CD4-positive, alpha-beta memory T cell (primary cell): ENCODE measurements at regions of chr5 and their contacts with region 1.

Region 1: GRCh38 chr5:128154943-128155342 is 71.4 kb downstream of the SLC12A2 start:
- DNase-seq: no peak
- H3K4me3 ChIP-seq: no peak overlapping the region
- H3K4me3 Mint-ChIP-seq: no peak overlapping the region
- H3K27ac ChIP-seq: no peak overlapping the region
- H3K27ac Mint-ChIP-seq: no peak overlapping the region
- H3K4me1 ChIP-seq: no peaks in the 10 kb centered on the region
- H3K4me1 Mint-ChIP-seq: no peaks in the 10 kb centered on the region
- H3K27me3 ChIP-seq: no peaks in the 10 kb centered on the region
- H3K27me3 Mint-ChIP-seq: no peaks in the 10 kb centered on the region

Region 2: GRCh38 chr5:128101676-128102075 is 53.3 kb before region 1 on chr5:
- CTCF ChIA-PET with region 1: no interaction called
- POLR2A ChIA-PET with region 1: no interaction called
- intact Hi-C with region 1: loop called (anchors 10 kb)
- DNase-seq: no peak
- H3K4me3 ChIP-seq: no peak overlapping the region
- H3K4me3 Mint-ChIP-seq: no peak overlapping the region
- H3K27ac ChIP-seq: no peak overlapping the region
- H3K27ac Mint-ChIP-seq: no peak overlapping the region
- H3K4me1 ChIP-seq: no peaks in the 10 kb centered on the region
- H3K4me1 Mint-ChIP-seq: peaks cover 0 to 6% (median 2%) of the 10 kb centered on the region in 4 donors
- H3K27me3 ChIP-seq: no peaks in the 10 kb centered on the region
- H3K27me3 Mint-ChIP-seq: no peaks in the 10 kb centered on the region

Region 3: DNA sequence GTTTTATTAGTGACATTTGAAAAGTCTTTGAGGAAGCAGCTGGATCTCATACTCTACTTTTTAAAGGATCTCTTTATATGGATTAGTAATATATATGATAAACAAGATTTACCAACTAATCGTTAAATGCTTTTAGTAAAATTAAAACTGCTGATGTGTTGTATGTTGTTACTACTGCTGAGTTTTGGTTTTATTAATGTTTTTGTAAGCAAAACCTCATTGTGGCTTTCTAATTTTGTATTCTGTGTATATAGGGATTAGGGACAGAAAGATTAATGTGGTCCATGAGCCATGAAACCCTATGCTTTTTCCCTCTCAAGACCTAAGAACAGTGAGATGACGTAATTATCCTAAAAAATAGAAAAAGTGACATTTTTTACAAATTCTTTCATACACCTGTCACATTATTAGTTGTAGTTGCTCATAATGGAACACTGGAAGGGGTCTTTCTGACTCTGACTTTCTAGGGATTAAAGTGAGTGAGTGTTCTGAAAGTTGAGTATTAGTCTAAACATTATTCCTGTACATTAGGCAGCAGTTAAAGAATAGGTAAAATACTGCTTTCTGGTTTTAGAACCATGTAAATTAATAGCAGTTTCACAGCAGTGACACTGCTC is 14.6 kb after region 1 on chr5:
- CTCF ChIA-PET with region 1: no interaction called
- POLR2A ChIA-PET with region 1: no interaction called
- intact Hi-C with region 1: no loop called
- DNase-seq: no peak
- H3K4me3 ChIP-seq: no peak overlapping the region
- H3K4me3 Mint-ChIP-seq: no peak overlapping the region
- H3K27ac ChIP-seq: no peak overlapping the region
- H3K27ac Mint-ChIP-seq: no peak overlapping the region
- H3K4me1 ChIP-seq: no peaks in the 10 kb centered on the region
- H3K4me1 Mint-ChIP-seq: peaks cover 0 to 1% (median 0%) of the 10 kb centered on the region in 4 donors
- H3K27me3 ChIP-seq: no peaks in the 10 kb centered on the region
- H3K27me3 Mint-ChIP-seq: no peaks in the 10 kb centered on the region